ENCODE measurements at regions of chr19 and their contacts with region 1.

Region 1: GRCh38 chr19:43743022-43743421 is 11.7 kb downstream of the SMG9 start:
- DNase-seq: no peak
- H3K27ac ChIP-seq: no peak overlapping the region
- CTCF ChIP-seq: no peak

Region 2: GRCh38 chr19:43715776-43716175 is 27.2 kb before region 1 on chr19 and contains the start of gene IRGC:
- CTCF ChIA-PET with region 1: no interaction called
- POLR2A ChIA-PET with region 1: no interaction called
- DNase-seq: no peak
- H3K27ac ChIP-seq: no peak within 1 kb of the TSS
- CTCF ChIP-seq: no peak

Region 3: GRCh38 chr19:43784981-43785808 is 42.2 kb after region 1 on chr19:
- CTCF ChIA-PET with region 1: interaction called, 20 read pairs
- POLR2A ChIA-PET with region 1: no interaction called
- DNase-seq: peak; percentile 70
- H3K27ac ChIP-seq: peak overlapping the region; percentile 96
- CTCF ChIP-seq: peak; percentile 99

Region 4: GRCh38 chr19:43809762-43810696 is 67.0 kb after region 1 on chr19:
- CTCF ChIA-PET with region 1: interaction called, 17 read pairs
- POLR2A ChIA-PET with region 1: no interaction called
- DNase-seq: peak; percentile 35
- H3K27ac ChIP-seq: no peak overlapping the region
- CTCF ChIP-seq: peak; percentile 69

Measured in RWPE1 (cell line).